Activated naive CD4-positive, alpha-beta T cell treated with anti-CD3 and anti-CD28 coated beads for 36 hours (primary cell): ENCODE measurements at regions of chr10 and their contacts with region 1.

Region 1: DNA sequence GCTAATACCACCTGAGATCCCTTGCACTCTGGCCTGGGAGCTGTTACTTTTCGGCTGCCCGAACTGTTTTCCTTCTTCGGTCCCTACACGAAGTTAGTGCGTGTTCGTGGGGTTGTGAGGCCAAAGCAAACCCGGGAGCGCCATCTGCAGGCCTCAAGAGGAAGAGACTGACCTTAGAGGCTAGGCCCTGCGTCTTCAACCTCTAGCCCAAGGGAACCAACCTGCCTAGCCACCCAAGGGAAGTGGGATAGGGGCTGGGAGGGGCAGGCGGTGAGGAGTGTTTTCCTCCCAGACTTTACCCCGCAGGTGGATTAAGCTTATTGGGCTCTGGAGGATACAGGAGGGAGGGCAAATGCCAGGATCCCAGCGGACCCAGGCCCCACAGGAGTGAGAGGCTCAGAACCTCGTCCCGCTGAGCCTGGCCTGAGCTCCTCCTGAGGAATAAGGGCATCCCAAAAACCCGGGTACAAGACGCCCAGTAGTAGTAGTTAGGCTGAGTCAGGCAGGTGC is 1.7 kb upstream of the PAX2 start:
- DNase-seq: peak; percentile 67
- H3K4me3 Mint-ChIP-seq: no peak overlapping the region
- H3K27ac Mint-ChIP-seq: no peak overlapping the region
- H3K4me1 Mint-ChIP-seq: peaks cover 40% of the 10 kb centered on the region
- H3K27me3 Mint-ChIP-seq: peaks cover 83% of the 10 kb centered on the region

Region 2: DNA sequence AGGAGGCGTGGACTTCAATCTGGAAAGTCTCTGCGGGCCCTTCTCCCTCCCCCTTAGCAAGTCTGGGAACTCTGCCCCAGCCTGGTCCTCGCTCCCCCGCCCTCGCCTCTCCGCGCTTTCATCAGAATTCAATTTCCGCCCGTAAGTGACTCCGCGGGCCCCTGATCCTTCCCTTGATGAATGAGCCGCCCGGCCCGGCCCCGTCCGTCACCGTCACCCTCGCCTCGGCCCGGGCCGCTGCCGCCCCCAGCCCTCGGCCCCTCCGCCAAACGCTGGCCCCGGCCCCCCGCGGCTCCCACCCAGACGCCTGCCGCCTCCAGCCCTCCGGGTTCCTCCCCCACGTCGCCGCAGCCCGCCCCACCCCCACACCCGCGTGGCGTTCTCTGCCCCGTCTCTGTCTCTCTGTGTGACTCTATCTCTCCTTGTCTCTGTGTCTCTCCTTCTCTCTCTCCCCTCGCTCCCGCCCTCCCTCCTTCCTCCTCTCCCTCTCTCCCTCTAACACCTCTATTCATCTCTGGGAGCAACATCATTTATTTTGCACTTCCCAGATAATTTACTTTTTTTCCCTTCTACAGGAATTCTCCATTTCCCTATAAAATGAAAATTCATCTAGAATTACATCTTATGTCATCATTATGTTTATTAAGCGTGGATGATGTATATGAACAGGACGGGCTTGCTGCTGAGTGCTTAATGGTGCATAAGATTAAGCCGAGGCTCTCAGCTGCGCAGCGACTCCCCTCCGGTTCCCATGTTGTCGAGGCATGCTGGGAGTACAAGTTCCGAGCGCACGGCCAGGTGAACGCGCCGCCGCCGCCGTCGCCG is 89.5 kb before region 1 on chr10:
- CTCF ChIA-PET with region 1: no interaction called
- intact Hi-C with region 1: loop called (anchors 5 kb)
- DNase-seq: peak; percentile 71
- H3K4me3 Mint-ChIP-seq: peak overlapping the region; percentile 71
- H3K27ac Mint-ChIP-seq: no peak overlapping the region
- H3K4me1 Mint-ChIP-seq: peaks cover 23% of the 10 kb centered on the region
- H3K27me3 Mint-ChIP-seq: peaks cover 61% of the 10 kb centered on the region

Region 3: GRCh38 chr10:100710151-100710871 is 33.4 kb before region 1 on chr10:
- CTCF ChIA-PET with region 1: interaction called, 8 read pairs
- intact Hi-C with region 1: loop called (anchors 5 kb)
- DNase-seq: no peak
- H3K4me3 Mint-ChIP-seq: no peak overlapping the region
- H3K27ac Mint-ChIP-seq: no peak overlapping the region
- H3K4me1 Mint-ChIP-seq: peaks cover 12% of the 10 kb centered on the region
- H3K27me3 Mint-ChIP-seq: peaks cover 66% of the 10 kb centered on the region

Region 4: DNA sequence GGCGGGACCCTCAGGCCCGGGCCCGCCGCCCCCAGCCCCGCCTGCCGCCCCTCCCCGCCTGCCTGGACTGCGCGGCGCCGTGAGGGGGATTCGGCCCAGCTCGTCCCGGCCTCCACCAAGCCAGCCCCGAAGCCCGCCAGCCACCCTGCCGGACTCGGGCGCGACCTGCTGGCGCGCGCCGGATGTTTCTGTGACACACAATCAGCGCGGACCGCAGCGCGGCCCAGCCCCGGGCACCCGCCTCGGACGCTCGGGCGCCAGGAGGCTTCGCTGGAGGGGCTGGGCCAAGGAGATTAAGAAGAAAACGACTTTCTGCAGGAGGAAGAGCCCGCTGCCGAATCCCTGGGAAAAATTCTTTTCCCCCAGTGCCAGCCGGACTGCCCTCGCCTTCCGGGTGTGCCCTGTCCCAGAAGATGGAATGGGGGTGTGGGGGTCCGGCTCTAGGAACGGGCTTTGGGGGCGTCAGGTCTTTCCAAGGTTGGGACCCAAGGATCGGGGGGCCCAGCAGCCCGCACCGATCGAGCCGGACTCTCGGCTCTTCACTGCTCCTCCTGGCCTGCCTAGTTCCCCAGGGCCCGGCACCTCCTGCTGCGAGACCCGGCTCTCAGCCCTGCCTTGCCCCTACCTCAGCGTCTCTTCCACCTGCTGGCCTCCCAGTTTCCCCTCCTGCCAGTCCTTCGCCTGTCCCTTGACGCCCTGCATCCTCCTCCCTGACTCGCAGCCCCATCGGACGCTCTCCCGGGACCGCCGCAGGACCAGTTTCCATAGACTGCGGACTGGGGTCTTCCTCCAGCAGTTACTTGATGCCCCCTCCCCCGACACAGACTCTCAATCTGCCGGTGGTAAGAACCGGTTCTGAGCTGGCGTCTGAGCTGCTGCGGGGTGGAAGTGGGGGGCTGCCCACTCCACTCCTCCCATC is 84.4 kb after region 1 on chr10:
- CTCF ChIA-PET with region 1: interaction called, 4 read pairs
- intact Hi-C with region 1: loop called (anchors 2 kb)
- DNase-seq: peak; percentile 50
- H3K4me3 Mint-ChIP-seq: peak overlapping the region; percentile 66
- H3K27ac Mint-ChIP-seq: no peak overlapping the region
- H3K4me1 Mint-ChIP-seq: peaks cover 19% of the 10 kb centered on the region
- H3K27me3 Mint-ChIP-seq: peaks cover 74% of the 10 kb centered on the region

Region 5: GRCh38 chr10:100912605-100913469 is 169.2 kb after region 1 on chr10 and contains the start of gene SLF2:
- CTCF ChIA-PET with region 1: no interaction called
- intact Hi-C with region 1: no loop called
- DNase-seq: peak; percentile 98
- H3K4me3 Mint-ChIP-seq: peak within 1 kb of the TSS; percentile 98
- H3K27ac Mint-ChIP-seq: peak within 1 kb of the TSS; percentile 99
- H3K4me1 Mint-ChIP-seq: peaks cover 42% of the 10 kb centered on the region
- H3K27me3 Mint-ChIP-seq: no peaks in the 10 kb centered on the region
- total RNA-seq, gene SLF2: 29.3 to 30.3 TPM

Region 6: DNA sequence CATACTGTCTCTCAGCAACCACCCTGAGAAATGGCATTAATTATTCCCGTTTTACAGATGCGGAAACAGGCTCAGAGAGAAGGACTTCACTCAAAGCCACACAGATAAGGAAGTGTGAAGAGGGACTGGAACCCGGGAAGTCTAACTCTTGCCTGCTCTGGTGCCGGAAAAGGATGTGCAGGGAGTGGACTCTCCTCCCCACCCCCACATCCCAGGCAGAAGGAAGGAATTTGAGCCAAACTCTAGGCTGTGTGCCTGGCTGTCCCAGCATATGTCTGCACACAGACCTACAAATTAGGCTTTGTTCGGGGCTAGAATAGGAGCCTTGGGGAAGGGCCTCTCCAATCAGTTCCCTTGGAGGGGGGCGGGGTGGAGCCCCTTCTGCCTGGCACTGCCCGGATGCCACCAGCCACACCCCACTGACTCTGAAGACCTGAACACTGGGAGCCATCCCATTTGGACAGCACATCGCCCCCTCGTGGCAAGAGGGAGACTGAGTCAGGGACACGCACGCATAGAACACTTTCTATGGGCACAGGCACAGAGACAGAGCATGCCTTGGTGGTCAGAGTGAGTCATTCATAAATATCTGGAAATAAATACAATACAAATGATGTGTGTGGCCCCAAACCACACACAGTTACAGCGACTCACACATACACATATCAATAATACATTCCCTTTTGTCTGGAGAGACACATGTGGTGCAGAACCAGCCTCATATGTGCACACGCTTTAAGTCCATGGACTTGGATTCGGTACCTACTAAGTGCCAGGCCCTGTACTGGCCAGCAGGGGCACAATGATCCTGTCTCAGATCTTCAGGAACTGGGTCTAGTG is 269.1 kb after region 1 on chr10:
- CTCF ChIA-PET with region 1: interaction called, 3 read pairs
- intact Hi-C with region 1: loop called (anchors 5 kb)
- DNase-seq: peak; percentile 85
- H3K4me3 Mint-ChIP-seq: no peak overlapping the region
- H3K27ac Mint-ChIP-seq: no peak overlapping the region
- H3K4me1 Mint-ChIP-seq: peaks cover 12% of the 10 kb centered on the region
- H3K27me3 Mint-ChIP-seq: peaks cover 29% of the 10 kb centered on the region

Region 7: DNA sequence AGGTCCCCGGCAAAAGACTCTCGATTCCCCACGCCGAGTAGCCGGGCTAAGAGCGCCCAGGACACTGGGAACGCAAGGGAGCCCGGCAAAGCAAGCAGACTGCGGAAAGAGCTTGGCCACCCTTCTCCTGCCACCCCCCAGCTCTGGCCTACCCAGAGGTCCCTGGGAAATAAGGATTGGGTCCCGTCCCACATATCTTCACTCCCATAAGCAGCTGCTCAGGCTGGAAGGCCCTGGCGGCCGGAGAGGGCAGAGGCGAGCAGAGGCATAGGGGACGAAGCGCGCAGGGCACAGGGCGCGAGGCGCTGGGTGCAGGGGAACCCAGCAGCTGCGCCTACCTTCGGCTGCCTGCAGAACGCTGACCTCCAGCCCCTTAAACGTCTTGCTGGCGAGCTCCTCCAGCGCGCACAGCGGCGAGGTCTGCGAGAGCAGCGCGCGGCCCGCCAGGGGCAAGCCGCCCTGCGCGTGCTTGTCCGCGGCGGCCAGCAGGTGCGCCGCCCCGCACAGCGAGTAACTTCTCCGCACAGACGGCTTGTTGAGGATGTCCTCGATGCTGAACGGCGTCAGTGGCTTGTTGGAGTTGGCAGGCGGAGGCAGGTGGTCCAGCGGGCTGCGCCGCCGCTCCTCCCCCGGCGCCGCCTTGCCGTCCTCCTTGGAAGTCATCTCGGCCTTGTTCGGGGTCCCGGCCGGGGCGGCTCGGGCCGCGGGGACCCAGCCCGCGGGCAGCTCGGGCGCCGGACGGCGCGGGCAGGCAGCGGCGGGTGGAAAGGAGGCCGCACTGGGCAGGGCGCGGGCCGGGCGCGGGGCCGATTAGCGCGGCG is 484.7 kb after region 1 on chr10:
- CTCF ChIA-PET with region 1: no interaction called
- intact Hi-C with region 1: loop called (anchors 10 kb)
- DNase-seq: no peak
- H3K4me3 Mint-ChIP-seq: no peak overlapping the region
- H3K27ac Mint-ChIP-seq: no peak overlapping the region
- H3K4me1 Mint-ChIP-seq: peaks cover 39% of the 10 kb centered on the region
- H3K27me3 Mint-ChIP-seq: peaks cover 72% of the 10 kb centered on the region